PC-3 (cell line): ENCODE measurements at regions of chr2 and their contacts with region 1.

Region 1: GRCh38 chr2:157789933-157790511 is 86.1 kb downstream of the ACVR1 start:
- DNase-seq: no peak
- ATAC-seq: no peak
- H3K4me3 ChIP-seq: no peak overlapping the region
- H3K27ac ChIP-seq: no peak overlapping the region
- H3K4me1 ChIP-seq: peaks cover 18% of the 10 kb centered on the region
- H3K27me3 ChIP-seq: no peaks in the 10 kb centered on the region
- CTCF ChIP-seq: no peak

Region 2: GRCh38 chr2:157805519-157805918 is 15.5 kb after region 1 on chr2:
- CTCF ChIA-PET with region 1: no interaction called
- POLR2A ChIA-PET with region 1: interaction called, 13 read pairs
- intact Hi-C with region 1: no loop called
- DNase-seq: no peak
- ATAC-seq: no peak
- H3K4me3 ChIP-seq: no peak overlapping the region
- H3K27ac ChIP-seq: no peak overlapping the region
- H3K4me1 ChIP-seq: no peaks in the 10 kb centered on the region
- H3K27me3 ChIP-seq: no peaks in the 10 kb centered on the region
- CTCF ChIP-seq: no peak

Region 3: GRCh38 chr2:158089322-158089721 is 299.3 kb after region 1 on chr2:
- CTCF ChIA-PET with region 1: no interaction called
- POLR2A ChIA-PET with region 1: no interaction called
- intact Hi-C with region 1: no loop called
- DNase-seq: no peak
- ATAC-seq: no peak
- H3K4me3 ChIP-seq: no peak overlapping the region
- H3K27ac ChIP-seq: no peak overlapping the region
- H3K4me1 ChIP-seq: no peaks in the 10 kb centered on the region
- H3K27me3 ChIP-seq: no peaks in the 10 kb centered on the region
- CTCF ChIP-seq: no peak